ENCODE measurements at regions of chr3 and their contacts with region 1.

Region 1: DNA sequence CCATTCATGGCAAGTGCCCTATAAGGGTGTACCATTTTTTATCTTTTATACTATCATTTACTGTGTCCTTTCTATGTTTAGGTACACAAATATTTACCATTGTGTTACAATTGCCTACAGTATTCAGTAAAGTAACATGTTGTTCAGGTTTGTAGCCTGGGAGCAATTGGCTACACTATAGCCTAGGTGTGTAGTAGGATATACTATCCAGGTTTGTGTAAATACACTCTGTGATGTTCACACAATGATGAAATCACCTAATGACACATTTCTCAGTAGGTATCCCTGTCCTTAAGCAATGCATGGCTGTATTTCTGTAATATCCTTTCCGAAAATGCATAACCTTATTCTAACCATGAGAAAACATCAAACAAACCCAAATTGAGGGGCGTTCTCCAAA is 17.9 kb upstream of the CNOT10 start:
- DNase-seq: no peak
- ATAC-seq: no peak
- H3K4me3 Mint-ChIP-seq: no peak overlapping the region
- H3K27ac Mint-ChIP-seq: no peak overlapping the region
- H3K4me1 Mint-ChIP-seq: no peaks in the 10 kb centered on the region
- H3K27me3 Mint-ChIP-seq: peaks cover 1% of the 10 kb centered on the region
- CTCF ChIP-seq: no peak

Region 2: GRCh38 chr3:32510075-32510724 is 156.9 kb before region 1 on chr3:
- CTCF ChIA-PET with region 1: interaction called, 9 read pairs
- POLR2A ChIA-PET with region 1: interaction called, 3 read pairs
- intact Hi-C with region 1: loop called (anchors 5 kb)
- DNase-seq: peak; percentile 80
- ATAC-seq: peak; percentile 92
- H3K4me3 Mint-ChIP-seq: no peak overlapping the region
- H3K27ac Mint-ChIP-seq: no peak overlapping the region
- H3K4me1 Mint-ChIP-seq: peaks cover 2% of the 10 kb centered on the region
- H3K27me3 Mint-ChIP-seq: no peaks in the 10 kb centered on the region
- CTCF ChIP-seq: peak; percentile 69